SK-N-SH (cell line): ENCODE measurements at regions of chrX and their contacts with region 1.

Region 1: GRCh38 chrX:68927178-68927577 is 98.4 kb downstream of the EFNB1 start:
- DNase-seq: no peak
- H3K4me3 ChIP-seq: no peak overlapping the region
- H3K27ac ChIP-seq: no peak overlapping the region
- H3K4me1 ChIP-seq: peaks cover 4 to 5% of the 10 kb centered on the region in 2 experiments; a peak in 1 of 4 replicates
- H3K27me3 ChIP-seq: peaks cover 5% of the 10 kb centered on the region; the same call in 1 of the 2 replicates
- CTCF ChIP-seq: no peak
- EP300 ChIP-seq: no peak
- RAD21 ChIP-seq: no peak

Region 2: GRCh38 chrX:68945603-68946228 is 18.5 kb after region 1 on chrX:
- CTCF ChIA-PET with region 1: interaction called, 12 read pairs
- POLR2A ChIA-PET with region 1: no interaction called
- DNase-seq: no peak
- H3K4me3 ChIP-seq: no peak overlapping the region
- H3K27ac ChIP-seq: no peak overlapping the region
- H3K4me1 ChIP-seq: peaks cover 0 to 20% of the 10 kb centered on the region in 2 experiments; a peak in 1 of 4 replicates
- H3K27me3 ChIP-seq: peaks cover 5% of the 10 kb centered on the region
- CTCF ChIP-seq: peak; percentile 48
- EP300 ChIP-seq: no peak
- RAD21 ChIP-seq: no peak